Adrenal gland (tissue), 19 donors: ENCODE measurements at regions of chr2 and their contacts with region 1.

Region 1: DNA sequence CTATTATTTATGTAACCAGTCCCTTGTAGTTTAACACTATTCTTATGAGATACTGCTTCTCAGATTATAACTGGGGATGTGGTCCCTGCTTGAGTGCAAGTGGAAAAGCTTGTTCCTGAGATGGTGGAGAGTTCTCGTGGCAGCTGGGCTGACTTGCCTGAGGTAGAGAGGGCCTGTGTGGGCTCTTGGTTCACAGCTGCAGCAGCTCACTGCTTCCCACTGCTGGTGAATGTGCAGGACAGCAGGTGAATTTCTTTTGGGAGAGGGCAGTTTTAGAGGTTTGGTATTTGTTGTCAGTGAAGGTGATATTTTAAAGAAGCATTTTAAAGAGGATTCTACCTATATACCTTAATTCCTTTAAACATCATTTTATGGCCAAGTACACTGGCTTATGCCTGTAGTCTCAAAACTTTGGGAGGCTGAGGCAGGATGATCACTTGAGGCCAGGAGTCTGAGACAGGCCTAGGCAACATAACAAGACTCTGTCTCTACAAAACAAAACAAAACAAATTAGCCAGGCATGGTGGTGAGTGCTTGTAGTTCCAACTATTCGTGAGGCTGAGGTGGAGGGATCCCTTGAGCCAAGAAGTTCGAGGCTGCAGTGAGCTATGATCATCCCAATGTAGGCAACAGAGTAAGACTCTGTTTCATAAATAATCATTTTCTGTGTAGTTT is 94.8 kb downstream of the MTA3 start:
- DNase-seq: peak; percentile 65 to 85 (median 78)
- H3K4me3 ChIP-seq: no peak overlapping the region
- H3K27ac ChIP-seq: peak overlapping the region in 3 of 5 donors; percentile 1 to 54 (median 38)
- H3K4me1 ChIP-seq: peaks cover 4 to 15% of the 10 kb centered on the region in 2 donors
- H3K27me3 ChIP-seq: no peaks in the 10 kb centered on the region
- CTCF ChIP-seq: peak; percentile 97 to 99 (median 98)
- POLR2A ChIP-seq: no peak

Region 2: GRCh38 chr2:42494355-42495233 is 168.6 kb before region 1 on chr2:
- intact Hi-C with region 1: loop called (anchors 5 kb)
- DNase-seq: peak; percentile 69 to 92 (median 79)
- H3K4me3 ChIP-seq: peak overlapping the region; percentile 22 to 82 (median 59)
- H3K27ac ChIP-seq: peak overlapping the region; percentile 54 to 82 (median 70)
- H3K4me1 ChIP-seq: peaks cover 6 to 9% of the 10 kb centered on the region in 2 donors
- H3K27me3 ChIP-seq: peaks cover 3% of the 10 kb centered on the region
- CTCF ChIP-seq: peak; percentile 81 to 89 (median 85)
- POLR2A ChIP-seq: peak in 1 of 2 donors; percentile 16

Region 3: DNA sequence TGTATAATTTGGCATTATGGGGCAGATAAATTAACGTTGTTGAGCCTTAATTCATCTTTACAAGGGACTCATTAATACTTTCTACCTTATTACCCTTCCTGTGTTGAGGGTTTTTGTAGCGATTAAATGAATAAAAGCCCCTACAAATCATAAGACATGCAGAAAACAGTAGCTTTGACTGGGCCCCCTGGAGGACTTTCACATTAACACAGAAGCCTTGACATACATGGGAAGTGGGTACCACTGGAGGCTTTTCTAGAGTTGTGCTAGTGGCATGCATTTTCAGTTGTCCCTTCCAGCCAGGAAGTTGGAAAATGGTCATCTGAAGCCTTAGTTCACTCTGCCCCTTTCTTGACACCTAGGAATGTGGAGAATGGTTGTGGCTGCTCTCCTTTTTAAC is 64.6 kb before region 1 on chr2:
- intact Hi-C with region 1: no loop called
- DNase-seq: no peak
- H3K4me3 ChIP-seq: no peak overlapping the region
- H3K27ac ChIP-seq: peak overlapping the region in 1 of 5 donors; percentile 8
- H3K4me1 ChIP-seq: peaks cover 8 to 36% of the 10 kb centered on the region in 2 donors
- H3K27me3 ChIP-seq: no peaks in the 10 kb centered on the region
- CTCF ChIP-seq: no peak
- POLR2A ChIP-seq: no peak

Region 4: DNA sequence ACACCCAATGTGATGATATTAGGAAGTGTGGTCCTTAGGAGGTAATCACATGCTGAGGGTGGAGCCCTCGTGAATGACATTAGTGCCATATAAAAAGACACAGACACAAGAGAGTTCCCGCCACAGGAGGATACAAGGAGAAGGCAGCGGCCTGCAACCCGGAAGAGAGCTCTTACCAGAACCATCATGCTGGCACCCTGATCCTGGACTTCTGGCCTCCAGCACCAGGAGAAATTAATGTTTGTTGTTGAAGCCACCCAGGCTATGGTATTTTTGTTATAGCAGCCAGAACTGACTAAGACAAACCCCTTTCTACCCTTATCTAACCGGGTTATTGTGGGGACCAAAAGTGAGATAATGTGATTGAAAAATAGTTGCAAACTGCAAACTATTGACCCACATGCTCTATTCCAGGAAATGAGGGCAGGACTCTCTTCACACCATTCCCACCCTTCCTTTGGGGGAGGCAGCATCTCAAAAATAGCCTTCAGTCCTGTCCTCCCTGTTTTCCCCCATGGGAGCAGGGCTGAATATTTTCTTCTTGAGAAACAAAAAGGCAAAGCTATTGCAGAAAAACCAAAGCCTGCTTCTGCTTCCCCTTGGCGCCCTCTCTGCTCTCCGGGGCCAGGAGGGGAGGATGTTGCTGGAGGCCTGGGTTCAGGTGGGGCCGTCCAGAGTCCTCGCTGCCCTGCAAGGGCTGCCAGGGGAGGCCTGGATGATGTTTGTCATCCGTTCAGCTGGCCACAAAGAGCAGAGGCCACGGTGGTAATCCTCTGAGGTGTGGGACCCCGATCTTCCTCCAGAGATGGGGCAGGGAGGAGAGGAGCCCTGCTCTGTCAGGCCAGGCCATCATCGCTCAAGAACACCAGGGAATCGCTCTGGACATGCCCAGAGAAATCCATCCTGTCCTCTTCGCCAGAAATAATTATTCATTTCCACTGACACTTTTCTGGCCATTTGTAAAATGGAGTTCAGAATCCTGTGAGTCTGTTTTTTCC is 202.9 kb after region 1 on chr2:
- intact Hi-C with region 1: no loop called
- DNase-seq: peak in 3 of 7 donors; percentile 10 to 36 (median 30)
- H3K4me3 ChIP-seq: no peak overlapping the region
- H3K27ac ChIP-seq: peak overlapping the region in 3 of 5 donors; percentile 37 to 70 (median 67)
- H3K4me1 ChIP-seq: peaks cover 3 to 15% of the 10 kb centered on the region in 2 donors
- H3K27me3 ChIP-seq: no peaks in the 10 kb centered on the region
- CTCF ChIP-seq: no peak
- POLR2A ChIP-seq: no peak